ENCODE measurements at regions of chr5 and their contacts with region 1.

Region 1: GRCh38 chr5:79514391-79515105 is 614 bp upstream of the HOMER1 start:
- DNase-seq: peak; percentile 92
- ATAC-seq: peak; percentile 88 to 89

Region 2: DNA sequence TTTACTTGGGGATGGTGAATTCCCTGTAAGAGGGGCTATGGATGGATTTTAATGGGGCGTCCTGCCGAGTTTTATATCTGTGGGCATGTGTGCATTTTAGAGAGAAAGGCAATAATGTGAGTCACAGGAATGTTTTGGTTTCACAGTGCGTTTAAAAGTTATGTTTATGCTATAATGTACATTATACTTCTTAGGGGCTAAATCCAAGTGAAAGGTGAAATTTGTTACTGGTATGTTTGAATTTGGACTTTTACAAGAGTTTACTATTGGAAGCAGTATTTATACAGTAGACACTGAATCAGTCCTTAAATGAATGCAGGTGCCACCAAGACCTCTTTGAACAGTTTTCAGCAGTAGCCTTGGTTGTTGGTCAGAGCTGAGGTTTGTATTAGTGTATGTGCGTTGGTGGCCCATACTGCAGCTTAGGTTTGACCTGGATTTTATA is 273.0 kb before region 1 on chr5:
- intact Hi-C with region 1: loop called in 1 of 2 experiments (anchors 5 kb)
- DNase-seq: no peak
- ATAC-seq: no peak

Region 3: GRCh38 chr5:79430196-79430595 is 84.4 kb before region 1 on chr5:
- intact Hi-C with region 1: no loop called
- DNase-seq: no peak
- ATAC-seq: no peak

Region 4: GRCh38 chr5:79552984-79553383 is 38.4 kb after region 1 on chr5:
- intact Hi-C with region 1: no loop called
- DNase-seq: no peak
- ATAC-seq: no peak

Measured in left cardiac atrium (tissue), 4 donors.